Heart right ventricle (tissue), 16 donors: ENCODE measurements at regions of chr7 and their contacts with region 1.

Region 1: GRCh38 chr7:114107522-114107921 is 188.7 kb upstream of the PPP1R3A start:
- DNase-seq: no peak
- ATAC-seq: no peak
- H3K4me3 ChIP-seq: no peak overlapping the region
- H3K27ac ChIP-seq: no peak overlapping the region
- H3K4me1 ChIP-seq: peaks cover 0 to 3% (median 0%) of the 10 kb centered on the region in 9 donors
- H3K27me3 ChIP-seq: peaks cover 0 to 12% (median 0%) of the 10 kb centered on the region in 7 donors
- CTCF ChIP-seq: no peak

Region 2: DNA sequence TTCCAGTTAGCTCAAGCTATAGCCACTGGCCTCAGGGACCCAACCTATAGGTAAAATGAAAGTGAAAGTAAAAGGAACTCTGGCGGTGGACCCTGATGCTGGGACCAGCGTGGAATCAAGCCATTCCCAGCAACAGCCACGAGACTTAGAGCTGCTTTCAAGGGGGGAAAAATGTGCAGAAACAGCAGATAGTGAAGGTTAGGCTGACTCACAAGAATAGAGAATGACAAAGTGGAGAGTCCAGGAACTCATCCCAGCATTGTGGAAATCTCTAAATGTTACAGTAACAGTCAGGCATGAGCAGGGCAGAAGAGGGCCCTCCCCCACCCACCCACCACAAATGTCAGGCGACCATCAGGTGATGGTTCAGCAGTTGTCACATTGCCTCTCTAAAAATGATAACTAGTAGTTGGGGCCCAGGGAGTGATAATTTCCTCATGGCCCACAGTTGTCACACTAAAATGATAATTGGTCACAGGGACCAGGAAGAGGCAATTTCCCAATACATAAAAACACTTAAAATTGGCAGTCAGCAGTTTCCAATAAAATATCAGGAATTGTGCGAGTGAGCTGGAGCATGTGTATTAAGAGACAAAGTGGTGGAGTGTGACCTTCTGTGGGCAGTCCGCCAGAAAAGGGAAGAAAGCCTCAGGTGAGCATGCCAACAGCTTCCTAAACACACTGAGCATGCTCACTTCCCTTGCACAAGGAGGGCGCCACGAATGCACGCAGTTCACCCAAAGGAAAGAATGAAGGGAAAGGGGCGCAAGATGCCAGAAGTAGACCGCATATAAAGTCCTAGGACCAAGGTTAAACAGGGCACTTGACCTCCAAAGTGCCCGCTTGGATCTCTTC is 58.9 kb before region 1 on chr7:
- intact Hi-C with region 1: loop called in 1 of 10 experiments (anchors 10 kb)
- DNase-seq: no peak
- ATAC-seq: no peak
- H3K4me3 ChIP-seq: peak overlapping the region in 9 of 10 donors; percentile 5 to 36 (median 30)
- H3K27ac ChIP-seq: peak overlapping the region in 1 of 10 donors; percentile 57
- H3K4me1 ChIP-seq: peaks cover 0 to 31% (median 0%) of the 10 kb centered on the region in 9 donors
- H3K27me3 ChIP-seq: no peaks in the 10 kb centered on the region
- CTCF ChIP-seq: no peak